KBM-7 (cell line): ENCODE measurements at regions of chr12 and their contacts with region 1.

Region 1: DNA sequence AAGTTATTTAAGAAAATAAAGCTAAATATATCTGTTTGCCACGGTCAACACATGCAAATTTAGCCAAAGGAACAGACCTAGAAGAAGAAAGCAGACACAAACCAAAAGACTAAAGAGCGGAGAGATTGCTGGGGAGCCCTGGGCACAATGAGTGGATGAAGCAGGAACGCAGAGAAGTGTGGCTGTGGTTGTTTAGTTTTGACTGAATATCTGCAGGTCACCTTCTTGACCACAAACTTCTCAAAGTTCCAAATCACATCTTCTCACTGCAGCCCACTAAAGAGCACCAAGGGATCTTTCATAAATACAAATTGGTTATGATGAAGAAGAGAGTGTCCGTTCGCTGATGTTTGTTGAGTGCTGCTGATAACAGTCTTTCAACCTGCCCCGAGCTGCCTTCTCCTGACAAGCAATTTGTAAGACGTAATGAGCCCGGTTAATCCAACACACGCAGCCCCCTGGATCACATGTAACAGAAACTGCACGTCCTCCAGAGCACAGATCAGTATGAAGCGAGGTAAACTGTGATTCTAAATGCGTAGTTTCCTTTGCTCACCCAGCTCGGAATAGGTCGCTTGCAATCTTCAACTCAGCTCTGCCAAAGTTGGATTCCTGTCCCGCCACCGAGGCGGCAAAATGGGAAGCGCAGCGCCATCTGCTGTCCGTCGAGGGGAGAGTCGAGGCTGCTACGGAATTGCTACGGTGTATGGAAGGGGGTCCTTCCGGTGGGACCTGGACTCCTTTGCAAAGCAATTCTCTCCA is 120.8 kb downstream of the GXYLT1 start:
- DNase-seq: peak; percentile 84

Region 2: DNA sequence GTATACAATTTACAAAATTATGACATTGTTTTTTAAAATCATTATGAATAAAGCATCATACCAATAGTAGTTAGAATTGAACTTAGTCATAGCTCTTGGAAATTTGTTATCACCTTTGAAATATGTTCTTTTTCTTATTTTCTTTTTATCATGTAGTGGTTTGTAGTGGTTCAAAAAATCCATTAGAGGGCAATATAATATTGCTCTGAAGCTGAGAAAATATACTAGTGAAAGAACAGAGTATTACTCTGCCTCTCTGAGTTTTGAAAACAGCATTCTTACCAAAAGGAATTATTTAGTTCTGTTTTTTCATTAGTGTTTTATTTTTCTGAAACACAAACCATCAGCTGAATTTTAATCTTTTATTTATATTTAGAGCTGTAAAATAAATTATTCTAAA is 759.6 kb before region 1 on chr12:
- in situ Hi-C with region 1: loop called (anchors 25 kb)
- DNase-seq: peak; percentile 18

Region 3: GRCh38 chr12:41367726-41368405 is 656.0 kb before region 1 on chr12:
- in situ Hi-C with region 1: no loop called
- DNase-seq: peak; percentile 8